ENCODE measurements at regions of chr1 and their contacts with region 1.

Region 1: GRCh38 chr1:156577550-156577949 is 2.0 kb upstream of the TTC24 start:
- DNase-seq: no peak
- H3K4me3 ChIP-seq: no peak overlapping the region
- H3K27ac ChIP-seq: no peak overlapping the region
- H3K4me1 ChIP-seq: no peaks in the 10 kb centered on the region; a peak in 1 of 7 replicates
- H3K27me3 ChIP-seq: no peaks in the 10 kb centered on the region
- CTCF ChIP-seq: no peak
- EP300 ChIP-seq: no peak
- POLR2A ChIP-seq: no peak
- RAD21 ChIP-seq: no peak

Region 2: GRCh38 chr1:156591432-156592157 is 14.0 kb after region 1 on chr1 and contains the start of gene NAXE:
- CTCF ChIA-PET with region 1: interaction called, 17 read pairs
- POLR2A ChIA-PET with region 1: interaction called, 27 read pairs
- DNase-seq: peak in 1 of 2 experiments; percentile 80
- H3K4me3 ChIP-seq: peak within 1 kb of the TSS; percentile 62 to 87 (median 81)
- H3K27ac ChIP-seq: peak within 1 kb of the TSS; percentile 26; the same call in 1 of the 2 replicates
- H3K4me1 ChIP-seq: peaks cover 0 to 10% (median 2%) of the 10 kb centered on the region in 4 experiments; a peak in 4 of 7 replicates
- H3K27me3 ChIP-seq: no peaks in the 10 kb centered on the region
- CTCF ChIP-seq: no peak
- EP300 ChIP-seq: no peak
- POLR2A ChIP-seq: peak; percentile 64; a peak in 2 of 3 replicates
- RAD21 ChIP-seq: no peak
- total RNA-seq, gene NAXE: 73.1 and 75.4 TPM in 2 replicates

Measured in H1 (cell line).